Activated CD4-positive, alpha-beta memory T cell treated with anti-CD3 and anti-CD28 coated beads for 36 hours (primary cell): ENCODE measurements at regions of chr5 and their contacts with region 1.

Region 1: DNA sequence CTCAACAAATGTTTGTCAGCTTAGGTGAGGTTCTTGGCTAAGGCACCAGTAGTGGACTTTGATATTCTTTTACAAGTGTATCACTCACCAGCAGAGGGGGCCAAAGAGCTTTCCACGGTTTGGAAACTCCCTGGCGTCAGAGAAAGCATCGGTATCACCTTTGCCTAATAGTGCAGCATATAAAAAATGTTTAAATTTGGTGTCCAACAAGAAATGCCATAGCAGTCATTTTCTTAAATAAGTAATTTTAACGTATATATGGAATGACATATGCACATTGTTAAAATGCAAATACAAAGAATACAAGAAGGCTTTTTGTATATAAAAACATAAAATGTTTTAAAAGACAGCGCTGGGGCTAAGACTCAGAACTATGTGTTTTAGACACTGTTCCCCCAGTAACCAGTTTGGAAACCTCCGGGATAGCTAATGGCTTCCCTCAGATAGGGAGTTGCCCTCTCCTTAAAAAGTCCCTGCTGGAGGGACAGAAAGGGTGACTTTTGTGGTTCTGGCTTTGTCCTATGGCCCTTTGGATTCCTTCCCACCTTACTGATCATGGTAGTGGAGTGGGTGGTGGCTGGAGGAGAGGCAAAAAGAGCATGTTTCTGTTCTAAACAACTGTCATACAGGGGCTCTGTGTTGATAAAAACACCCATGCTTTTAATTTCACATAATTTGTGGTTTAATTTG is 124.6 kb downstream of the GPBP1 start:
- DNase-seq: peak; percentile 86
- H3K4me3 Mint-ChIP-seq: peak overlapping the region; percentile 43
- H3K27ac Mint-ChIP-seq: peak overlapping the region; percentile 54
- H3K4me1 Mint-ChIP-seq: peaks cover 39% of the 10 kb centered on the region
- H3K27me3 Mint-ChIP-seq: no peaks in the 10 kb centered on the region

Region 2: GRCh38 chr5:57199866-57200265 is 98.6 kb before region 1 on chr5:
- CTCF ChIA-PET with region 1: no interaction called
- POLR2A ChIA-PET with region 1: no interaction called
- intact Hi-C with region 1: no loop called
- DNase-seq: no peak
- H3K4me3 Mint-ChIP-seq: no peak overlapping the region
- H3K27ac Mint-ChIP-seq: peak overlapping the region; percentile 32
- H3K4me1 Mint-ChIP-seq: peaks cover 67% of the 10 kb centered on the region
- H3K27me3 Mint-ChIP-seq: no peaks in the 10 kb centered on the region

Region 3: DNA sequence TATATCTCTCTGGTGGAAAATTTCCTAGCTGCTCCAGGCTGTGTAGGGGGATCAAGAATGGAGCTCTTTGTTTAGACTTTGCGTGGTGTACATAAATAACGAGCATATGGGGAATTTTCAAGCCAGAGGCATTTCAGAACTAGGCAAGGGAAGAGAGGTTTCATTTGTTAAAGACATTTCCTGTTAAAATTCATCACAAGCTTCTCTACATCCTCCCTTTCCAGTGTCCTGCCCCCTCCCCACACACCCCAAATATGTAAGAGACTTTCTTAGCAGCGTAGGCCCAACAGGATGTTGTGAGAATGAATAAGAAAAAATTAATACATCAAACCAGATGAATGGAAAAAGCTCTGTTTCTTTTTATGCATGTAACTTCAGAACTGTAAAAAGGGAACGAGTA is 25.7 kb after region 1 on chr5:
- CTCF ChIA-PET with region 1: interaction called, 6 read pairs
- POLR2A ChIA-PET with region 1: no interaction called
- intact Hi-C with region 1: loop called (anchors 1 kb)
- DNase-seq: peak; percentile 31
- H3K4me3 Mint-ChIP-seq: no peak overlapping the region
- H3K27ac Mint-ChIP-seq: peak overlapping the region; percentile 2
- H3K4me1 Mint-ChIP-seq: peaks cover 15% of the 10 kb centered on the region
- H3K27me3 Mint-ChIP-seq: no peaks in the 10 kb centered on the region

Region 4: GRCh38 chr5:57432876-57433275 is 134.4 kb after region 1 on chr5:
- CTCF ChIA-PET with region 1: no interaction called
- POLR2A ChIA-PET with region 1: no interaction called
- intact Hi-C with region 1: loop called (anchors 5 kb)
- DNase-seq: no peak
- H3K4me3 Mint-ChIP-seq: no peak overlapping the region
- H3K27ac Mint-ChIP-seq: no peak overlapping the region
- H3K4me1 Mint-ChIP-seq: no peaks in the 10 kb centered on the region
- H3K27me3 Mint-ChIP-seq: no peaks in the 10 kb centered on the region

Region 5: GRCh38 chr5:57598756-57599155 is 300.3 kb after region 1 on chr5:
- CTCF ChIA-PET with region 1: interaction called, 4 read pairs
- POLR2A ChIA-PET with region 1: no interaction called
- intact Hi-C with region 1: loop called (anchors 1 kb)
- DNase-seq: peak; percentile 60
- H3K4me3 Mint-ChIP-seq: no peak overlapping the region
- H3K27ac Mint-ChIP-seq: no peak overlapping the region
- H3K4me1 Mint-ChIP-seq: peaks cover 15% of the 10 kb centered on the region
- H3K27me3 Mint-ChIP-seq: peaks cover 3% of the 10 kb centered on the region

Region 6: GRCh38 chr5:57779383-57780223 is 481.2 kb after region 1 on chr5:
- CTCF ChIA-PET with region 1: interaction called, 4 read pairs
- POLR2A ChIA-PET with region 1: no interaction called
- intact Hi-C with region 1: loop called (anchors 2 kb)
- DNase-seq: peak; percentile 21
- H3K4me3 Mint-ChIP-seq: no peak overlapping the region
- H3K27ac Mint-ChIP-seq: no peak overlapping the region
- H3K4me1 Mint-ChIP-seq: no peaks in the 10 kb centered on the region
- H3K27me3 Mint-ChIP-seq: peaks cover 6% of the 10 kb centered on the region